Dendritic cell treated with granulocyte-macrophage colony-stimulating factor and Interleukin-4, amounts not matched to agents 40 ng/mL and 50 ng/mL, for 4 days (primary cell): ENCODE measurements at regions of chr2 and their contacts with region 1.

Region 1: GRCh38 chr2:68943581-68944568 is 8.8 kb downstream of the GKN2 start:
- H3K4me3 Mint-ChIP-seq: no peak overlapping the region
- H3K27ac Mint-ChIP-seq: peak overlapping the region; percentile 46
- H3K4me1 Mint-ChIP-seq: peaks cover 13% of the 10 kb centered on the region
- H3K27me3 Mint-ChIP-seq: peaks cover 4% of the 10 kb centered on the region

Region 2: DNA sequence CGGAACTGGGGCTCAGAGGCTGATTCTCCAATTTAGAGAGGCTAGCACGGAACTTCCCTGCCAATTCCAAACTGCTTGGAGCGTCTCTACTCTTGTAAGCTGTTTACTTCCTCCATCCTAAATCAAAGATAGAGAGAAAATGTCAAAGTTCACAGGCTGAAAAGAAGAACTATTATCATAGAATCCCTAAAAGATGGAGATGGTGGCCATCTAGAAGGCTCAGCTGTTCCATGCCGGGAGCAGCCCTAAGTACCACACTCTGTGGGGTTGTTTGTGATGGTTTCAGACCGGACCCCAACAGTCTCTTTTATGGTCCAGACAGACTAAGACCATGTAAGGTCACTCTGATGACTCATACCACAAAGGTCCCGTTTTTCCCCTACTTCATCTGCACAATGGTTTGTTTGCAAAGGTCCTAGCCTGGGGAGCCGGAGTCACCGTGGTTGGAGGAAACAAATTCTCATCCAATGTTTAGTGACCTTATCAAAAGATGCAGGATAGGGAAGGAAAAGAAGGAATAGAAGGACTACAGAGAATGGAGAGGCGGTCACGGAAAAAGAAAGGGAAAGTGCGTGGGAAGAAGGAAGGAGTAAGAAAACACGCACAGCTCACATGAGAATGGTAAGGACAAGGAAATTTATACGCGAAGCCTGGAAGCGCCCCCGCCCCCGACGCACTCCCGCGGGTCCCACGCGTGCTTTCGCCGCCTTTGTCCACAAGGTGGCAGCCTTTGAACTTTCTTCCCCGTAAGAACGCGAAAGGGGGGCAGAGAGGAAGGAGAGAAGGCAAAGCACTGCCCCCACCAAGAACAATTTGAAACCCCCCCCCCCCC is 68.7 kb after region 1 on chr2:
- intact Hi-C with region 1: loop called (anchors 2 kb)
- H3K4me3 Mint-ChIP-seq: peak overlapping the region; percentile 77
- H3K27ac Mint-ChIP-seq: peak overlapping the region; percentile 35
- H3K4me1 Mint-ChIP-seq: peaks cover 27% of the 10 kb centered on the region
- H3K27me3 Mint-ChIP-seq: peaks cover 57% of the 10 kb centered on the region

Region 3: GRCh38 chr2:69356471-69356870 is 412.6 kb after region 1 on chr2:
- intact Hi-C with region 1: no loop called
- H3K4me3 Mint-ChIP-seq: no peak overlapping the region
- H3K27ac Mint-ChIP-seq: no peak overlapping the region
- H3K4me1 Mint-ChIP-seq: no peaks in the 10 kb centered on the region
- H3K27me3 Mint-ChIP-seq: no peaks in the 10 kb centered on the region

Region 4: GRCh38 chr2:70420128-70420530 is 1476.3 kb after region 1 on chr2:
- intact Hi-C with region 1: no loop called
- H3K4me3 Mint-ChIP-seq: no peak overlapping the region
- H3K27ac Mint-ChIP-seq: no peak overlapping the region
- H3K4me1 Mint-ChIP-seq: no peaks in the 10 kb centered on the region
- H3K27me3 Mint-ChIP-seq: peaks cover 6% of the 10 kb centered on the region